Right ventricle myocardium inferior (tissue), 1 donor: ENCODE measurements at regions of chr3 and their contacts with region 1.

Region 1: DNA sequence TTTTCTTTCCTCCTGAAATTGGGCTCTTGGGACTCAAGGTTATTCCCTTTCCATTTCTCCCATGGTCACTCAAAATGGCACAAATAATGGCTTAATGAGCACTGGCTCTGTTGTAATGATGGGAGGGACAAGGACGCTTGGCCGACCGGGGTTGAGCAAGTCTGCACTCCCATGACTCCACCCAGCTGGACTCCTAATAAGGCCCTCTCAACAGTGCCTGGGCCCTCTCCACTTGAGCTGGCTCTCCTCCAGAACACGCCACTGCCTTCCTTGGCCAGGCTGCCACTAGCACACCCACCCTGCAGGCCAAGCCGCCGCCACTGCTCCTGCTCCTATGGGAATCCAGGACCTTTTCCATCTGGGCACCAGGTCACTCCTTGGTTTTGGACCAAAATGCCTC is 42.3 kb downstream of the ADCY5 start:
- DNase-seq: peak; percentile 84
- ATAC-seq: peak; percentile 73

Region 2: GRCh38 chr3:123341871-123342642 is 64.5 kb before region 1 on chr3:
- intact Hi-C with region 1: loop called (anchors 1 kb)
- DNase-seq: no peak
- ATAC-seq: no peak

Region 3: DNA sequence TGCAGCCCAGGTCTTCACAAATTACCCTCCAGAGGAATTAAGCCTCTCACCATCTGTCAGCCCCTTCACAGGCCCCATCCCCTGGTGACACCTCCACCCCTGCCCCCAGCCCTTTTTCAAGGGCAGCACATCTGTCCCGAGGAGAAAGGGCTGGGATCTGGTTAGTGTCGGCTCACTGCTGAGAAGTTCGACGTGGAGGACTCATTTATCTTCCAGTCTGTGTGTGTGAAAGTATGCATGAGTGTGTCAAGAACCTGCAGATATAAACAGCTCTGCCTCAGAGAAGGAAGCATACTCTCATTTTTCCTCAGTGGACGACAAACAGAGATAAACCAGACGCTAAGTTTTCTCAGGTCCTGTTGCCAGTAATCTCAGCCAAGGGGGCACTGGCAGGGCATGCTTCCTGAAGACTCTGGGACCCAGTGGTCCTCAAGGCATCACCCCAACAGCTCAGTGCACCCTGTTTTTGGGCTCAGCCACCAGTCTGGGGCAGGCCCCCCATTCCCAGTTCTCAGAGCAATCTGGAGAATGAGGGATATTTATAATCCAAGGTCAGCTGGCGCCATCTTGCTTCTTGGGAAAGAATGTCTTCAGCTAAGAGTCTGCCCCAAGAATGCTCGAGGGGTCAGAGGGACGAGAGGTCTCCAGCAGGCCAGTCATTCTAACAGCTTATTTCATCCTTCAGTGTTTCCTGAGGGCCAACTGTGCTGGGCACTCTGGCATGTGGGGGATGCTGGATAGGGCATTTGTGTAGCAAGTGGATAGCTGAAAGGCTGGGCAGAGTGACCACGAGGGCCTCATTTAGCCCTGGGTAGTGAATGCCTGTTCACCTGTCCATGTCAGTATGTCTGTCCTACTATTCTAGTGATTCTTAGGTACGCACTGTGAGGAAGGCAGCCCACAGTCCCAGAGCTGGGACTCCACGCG is 31.3 kb before region 1 on chr3:
- intact Hi-C with region 1: loop called (anchors 5 kb)
- DNase-seq: no peak
- ATAC-seq: peak; percentile 50